ENCODE measurements at regions of chr3 and their contacts with region 1.

Region 1: DNA sequence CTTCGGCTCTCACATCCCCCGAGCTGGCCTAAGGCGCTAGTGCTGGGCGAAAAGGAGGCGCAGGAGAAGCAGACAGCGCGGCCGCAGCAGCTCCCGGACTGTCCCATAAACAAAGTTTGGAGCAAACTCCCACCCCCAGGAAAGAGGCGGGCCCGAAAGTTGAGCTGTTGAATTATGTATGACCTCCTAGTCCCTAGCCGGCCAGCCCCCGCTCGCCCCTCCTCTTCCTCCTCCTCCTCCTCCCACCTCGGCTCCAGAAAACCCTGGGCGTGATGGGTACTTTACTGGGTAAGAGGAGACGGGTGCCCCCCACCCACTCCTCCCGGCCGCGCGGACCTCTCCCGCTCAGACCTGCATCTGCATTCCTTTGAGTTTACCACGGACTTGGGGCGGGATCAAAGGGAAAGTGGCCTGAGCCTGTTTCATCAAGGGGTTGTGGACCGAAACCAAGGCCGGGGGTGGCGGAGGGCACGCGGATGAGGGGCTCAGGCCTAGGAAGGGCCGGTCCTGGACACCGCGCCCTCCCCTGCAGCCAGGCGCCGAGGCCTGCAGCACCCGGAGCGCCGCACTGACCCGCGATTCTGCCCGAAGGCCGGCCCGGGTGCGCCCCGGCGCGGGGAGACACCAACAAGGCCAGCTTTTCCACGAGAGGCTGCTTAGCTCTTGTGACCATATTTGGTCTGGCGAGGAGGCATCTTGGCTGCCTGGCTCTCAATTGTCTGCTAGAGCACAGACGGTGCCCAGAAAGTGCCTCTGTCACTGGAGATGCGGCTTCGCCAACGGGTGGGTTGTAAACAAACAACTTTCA is at the start of gene WWTR1:
- DNase-seq: peak; percentile 94 to 97 (median 96)
- H3K4me3 ChIP-seq: peak within 1 kb of the TSS; percentile 80
- H3K27ac ChIP-seq: peak within 1 kb of the TSS; percentile 97 to 98
- H3K4me1 ChIP-seq: peaks cover 9% of the 10 kb centered on the region
- H3K27me3 ChIP-seq: no peaks in the 10 kb centered on the region
- CTCF ChIP-seq: peak in 2 of 3 donors; percentile 19 to 28
- EP300 ChIP-seq: no peak
- POLR2A ChIP-seq: peak; percentile 91
- total RNA-seq, gene WWTR1: 96.0 to 160 (median 112) TPM

Region 2: GRCh38 chr3:149536429-149536828 is 121.7 kb before region 1 on chr3:
- intact Hi-C with region 1: loop called in 3 of 4 experiments (anchors 5 to 10 kb)
- DNase-seq: peak; percentile 55 to 70 (median 59)
- H3K4me3 ChIP-seq: no peak overlapping the region
- H3K27ac ChIP-seq: peak overlapping the region; percentile 21 to 73
- H3K4me1 ChIP-seq: peaks cover 30% of the 10 kb centered on the region
- H3K27me3 ChIP-seq: no peaks in the 10 kb centered on the region
- CTCF ChIP-seq: no peak
- EP300 ChIP-seq: no peak
- POLR2A ChIP-seq: no peak

Region 3: GRCh38 chr3:149575961-149576564 is 82.1 kb before region 1 on chr3:
- intact Hi-C with region 1: loop called in 2 of 4 experiments (anchors 10 kb)
- DNase-seq: peak in 3 of 5 donors; percentile 36 to 69 (median 40)
- H3K4me3 ChIP-seq: no peak overlapping the region
- H3K27ac ChIP-seq: peak overlapping the region; percentile 25 to 72
- H3K4me1 ChIP-seq: peaks cover 27% of the 10 kb centered on the region
- H3K27me3 ChIP-seq: no peaks in the 10 kb centered on the region
- CTCF ChIP-seq: no peak
- EP300 ChIP-seq: no peak
- POLR2A ChIP-seq: no peak

Region 4: DNA sequence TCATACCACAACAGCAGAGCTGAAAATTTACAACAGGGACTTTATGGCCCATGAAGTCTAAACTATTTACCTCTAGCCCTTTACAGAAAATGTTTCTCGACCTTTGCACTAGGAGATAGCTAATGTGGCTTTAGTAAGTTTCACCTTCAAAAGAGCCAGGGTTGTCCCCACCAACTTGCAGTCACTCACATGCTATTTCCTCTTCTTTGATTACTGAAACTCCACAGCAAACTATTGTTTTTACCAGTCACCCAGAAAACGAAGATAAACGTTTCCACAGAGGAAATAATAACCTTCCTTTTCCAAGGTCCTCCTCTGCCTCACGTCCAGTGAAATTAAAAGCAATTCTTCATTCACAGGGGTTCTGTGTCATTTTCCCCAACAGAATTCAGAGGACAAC is 48.5 kb before region 1 on chr3:
- intact Hi-C with region 1: loop called in 1 of 4 experiments (anchors 10 kb)
- DNase-seq: no peak
- H3K4me3 ChIP-seq: no peak overlapping the region
- H3K27ac ChIP-seq: no peak overlapping the region
- H3K4me1 ChIP-seq: peaks cover 18% of the 10 kb centered on the region
- H3K27me3 ChIP-seq: no peaks in the 10 kb centered on the region
- CTCF ChIP-seq: no peak
- EP300 ChIP-seq: no peak
- POLR2A ChIP-seq: no peak

Region 5: DNA sequence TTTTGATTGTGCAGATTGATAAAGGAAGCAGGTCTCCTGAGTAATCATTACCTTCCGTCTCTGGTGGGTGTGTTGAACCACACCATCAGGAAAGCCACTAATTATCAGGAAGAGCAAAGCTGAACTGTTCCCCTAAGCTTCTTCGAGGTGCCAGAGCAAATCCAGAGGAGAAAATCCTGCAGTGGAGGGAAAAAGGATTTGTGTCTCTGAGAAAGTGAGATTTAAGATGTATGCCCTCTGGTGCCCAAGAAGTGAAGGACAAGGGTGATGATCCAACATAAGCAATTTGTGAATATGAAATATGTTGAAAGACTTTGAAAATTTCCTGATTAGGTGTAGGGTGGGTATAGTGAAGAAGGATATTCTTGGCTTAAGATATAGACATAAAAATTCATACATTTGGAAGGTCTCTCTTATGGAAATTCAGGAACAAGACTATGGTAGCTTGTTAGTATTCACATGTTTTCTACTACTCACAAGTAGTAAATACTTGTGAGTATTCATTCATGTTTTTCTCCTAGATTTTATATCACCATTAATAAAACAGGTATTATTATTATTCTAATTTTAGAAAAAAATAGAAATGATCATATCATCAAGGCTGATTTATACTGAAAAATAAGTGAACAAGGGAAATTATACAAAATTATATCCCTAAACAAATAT is 59.4 kb after region 1 on chr3:
- intact Hi-C with region 1: loop called in 1 of 4 experiments (anchors 10 kb)
- DNase-seq: peak in 4 of 5 donors; percentile 42 to 80 (median 50)
- H3K4me3 ChIP-seq: no peak overlapping the region
- H3K27ac ChIP-seq: peak overlapping the region in 1 of 2 donors; percentile 13
- H3K4me1 ChIP-seq: peaks cover 3% of the 10 kb centered on the region
- H3K27me3 ChIP-seq: no peaks in the 10 kb centered on the region
- CTCF ChIP-seq: peak; percentile 77 to 82 (median 79)
- EP300 ChIP-seq: no peak
- POLR2A ChIP-seq: no peak